Activated CD8-positive, alpha-beta memory T cell treated with anti-CD3 and anti-CD28 coated beads, Interleukin-2, amount 10 ng/mL, durations not matched to agents 7 days and 5 days (primary cell): ENCODE measurements at regions of chr12 and their contacts with region 1.

Region 1: DNA sequence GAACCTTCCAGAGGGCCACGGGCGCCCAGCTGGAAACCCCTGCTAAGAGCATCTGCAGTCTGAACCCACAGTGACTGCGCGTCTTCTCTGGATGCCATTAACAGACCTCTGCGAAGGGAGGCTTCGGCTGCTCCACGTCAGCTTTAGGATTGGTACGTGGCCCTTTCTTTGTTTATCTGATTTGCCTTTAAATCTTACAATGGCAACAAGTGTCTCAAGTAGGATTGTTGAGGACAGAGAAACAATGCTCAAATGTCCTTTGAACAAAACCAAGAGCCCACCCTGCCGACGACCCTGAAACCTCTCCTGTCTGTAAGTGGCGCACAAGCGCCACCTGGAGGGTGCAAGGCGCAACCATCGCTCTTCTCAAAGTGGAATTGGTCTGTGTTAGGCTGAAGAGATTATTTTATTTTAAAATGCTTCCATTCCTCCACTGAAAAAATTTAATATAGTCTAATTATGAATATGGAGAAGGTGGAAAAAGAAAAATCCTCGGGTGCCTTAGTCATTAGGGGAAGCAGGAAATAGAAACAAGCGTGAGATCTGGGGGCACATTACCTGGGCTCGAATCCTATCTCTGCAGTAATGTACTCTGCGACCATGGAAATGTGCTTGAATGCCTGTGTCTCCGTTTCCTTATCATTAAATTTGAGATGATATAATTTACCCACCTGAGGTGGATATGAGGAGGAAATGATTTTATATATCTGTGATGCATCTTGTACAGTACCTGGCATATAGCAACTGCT is 82.6 kb upstream of the PTPRB start:
- DNase-seq: no peak
- ATAC-seq: peak; percentile 42
- H3K4me3 Mint-ChIP-seq: no peak overlapping the region
- H3K27ac Mint-ChIP-seq: no peak overlapping the region
- H3K4me1 Mint-ChIP-seq: peaks cover 9% of the 10 kb centered on the region
- H3K27me3 Mint-ChIP-seq: peaks cover 14% of the 10 kb centered on the region

Region 2: GRCh38 chr12:70549340-70550179 is 170.3 kb before region 1 on chr12:
- CTCF ChIA-PET with region 1: no interaction called
- DNase-seq: no peak
- ATAC-seq: no peak
- H3K4me3 Mint-ChIP-seq: no peak overlapping the region
- H3K27ac Mint-ChIP-seq: no peak overlapping the region
- H3K4me1 Mint-ChIP-seq: no peaks in the 10 kb centered on the region
- H3K27me3 Mint-ChIP-seq: peaks cover 3% of the 10 kb centered on the region

Region 3: GRCh38 chr12:70730675-70731180 is 10.9 kb after region 1 on chr12:
- CTCF ChIA-PET with region 1: interaction called, 12 read pairs
- DNase-seq: no peak
- ATAC-seq: no peak
- H3K4me3 Mint-ChIP-seq: no peak overlapping the region
- H3K27ac Mint-ChIP-seq: no peak overlapping the region
- H3K4me1 Mint-ChIP-seq: no peaks in the 10 kb centered on the region
- H3K27me3 Mint-ChIP-seq: no peaks in the 10 kb centered on the region